Transverse colon (tissue), 4 donors: ENCODE measurements at regions of chr22 and their contacts with region 1.

Region 1: DNA sequence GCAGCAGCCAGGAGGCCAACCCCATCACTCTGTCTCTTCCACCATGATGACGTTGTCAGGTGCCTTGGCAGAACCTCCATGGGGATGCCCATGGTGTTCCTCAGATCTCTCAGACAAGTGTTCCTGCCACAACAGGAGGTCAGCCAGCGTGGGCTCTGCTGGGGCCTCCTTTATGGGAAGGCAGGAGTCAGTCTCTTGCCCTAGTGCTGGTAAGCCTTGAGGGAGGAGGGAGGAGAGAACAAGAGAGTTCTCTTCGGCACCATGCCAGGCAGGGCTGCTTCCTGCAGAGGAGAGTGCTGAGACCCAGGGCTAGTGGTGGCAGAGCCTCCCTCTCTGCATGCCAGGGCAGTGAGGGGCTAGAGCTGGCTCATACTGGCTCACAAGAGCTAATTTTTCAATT is 32.5 kb downstream of the GNAZ start:
- DNase-seq: no peak
- H3K4me3 ChIP-seq: no peak overlapping the region
- H3K27ac ChIP-seq: no peak overlapping the region
- H3K4me1 ChIP-seq: peaks cover 11 to 15% (median 13%) of the 10 kb centered on the region in 4 donors
- H3K27me3 ChIP-seq: no peaks in the 10 kb centered on the region
- CTCF ChIP-seq: no peak
- EP300 ChIP-seq: no peak
- POLR2A ChIP-seq: no peak

Region 2: GRCh38 chr22:23063539-23064380 is 39.0 kb before region 1 on chr22:
- in situ Hi-C with region 1: no loop called
- intact Hi-C with region 1: loop called (anchors 1 kb)
- DNase-seq: no peak
- H3K4me3 ChIP-seq: no peak overlapping the region
- H3K27ac ChIP-seq: no peak overlapping the region
- H3K4me1 ChIP-seq: no peaks in the 10 kb centered on the region
- H3K27me3 ChIP-seq: no peaks in the 10 kb centered on the region
- CTCF ChIP-seq: no peak
- EP300 ChIP-seq: no peak
- POLR2A ChIP-seq: no peak